ENCODE measurements at regions of chr10 and their contacts with region 1.

Region 1: DNA sequence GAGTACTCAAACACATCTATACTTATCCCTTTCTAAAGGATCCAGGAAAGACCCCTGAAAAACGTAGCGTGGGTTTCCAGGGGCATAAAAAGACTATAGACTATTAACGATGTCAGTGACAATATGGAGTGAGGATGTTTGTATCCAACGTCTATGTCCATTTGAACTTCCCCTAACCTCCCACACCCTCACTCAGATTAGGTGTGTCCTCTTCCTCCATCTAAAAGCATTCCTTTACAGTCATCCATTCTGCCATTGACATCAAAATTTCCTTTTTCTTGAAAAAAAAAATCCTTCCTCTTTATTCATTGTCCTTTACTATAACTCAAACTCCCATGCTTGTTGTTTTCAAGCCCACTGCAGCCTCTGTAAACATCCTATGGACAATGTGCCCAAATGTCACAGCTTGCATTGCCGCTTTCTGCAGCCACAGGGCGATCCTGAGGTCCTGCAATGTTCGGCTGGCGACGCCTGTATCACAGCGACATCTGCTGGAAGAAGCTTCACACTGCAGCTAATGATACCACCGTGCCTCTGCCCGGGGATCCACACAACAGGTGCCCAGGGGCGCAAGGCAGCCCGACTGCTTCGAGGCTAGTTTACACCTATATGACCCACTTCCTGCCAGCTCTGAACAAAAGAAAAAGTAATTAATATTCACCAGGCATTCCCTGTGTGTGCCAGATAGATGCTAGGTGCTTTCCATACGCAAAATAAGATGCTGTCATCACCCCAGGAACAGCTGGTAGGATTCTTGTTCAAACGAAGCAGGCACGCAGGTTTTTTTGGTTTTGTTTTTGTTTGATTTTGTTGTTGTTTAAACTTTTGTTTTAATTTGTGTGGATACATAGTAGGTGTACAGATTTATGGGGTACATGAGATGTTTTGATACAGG is 267.9 kb upstream of the GHITM start:
- DNase-seq: peak; percentile 76
- H3K4me3 Mint-ChIP-seq: no peak overlapping the region
- H3K27ac Mint-ChIP-seq: no peak overlapping the region
- H3K4me1 Mint-ChIP-seq: no peaks in the 10 kb centered on the region
- H3K27me3 Mint-ChIP-seq: no peaks in the 10 kb centered on the region

Region 2: GRCh38 chr10:82796510-82796909 is 1074.9 kb before region 1 on chr10:
- CTCF ChIA-PET with region 1: interaction called, 4 read pairs
- intact Hi-C with region 1: loop called (anchors 5 kb)
- DNase-seq: no peak
- H3K4me3 Mint-ChIP-seq: no peak overlapping the region
- H3K27ac Mint-ChIP-seq: no peak overlapping the region
- H3K4me1 Mint-ChIP-seq: no peaks in the 10 kb centered on the region
- H3K27me3 Mint-ChIP-seq: no peaks in the 10 kb centered on the region

Region 3: GRCh38 chr10:83849135-83849534 is 22.3 kb before region 1 on chr10:
- CTCF ChIA-PET with region 1: interaction called, 18 read pairs
- intact Hi-C with region 1: no loop called
- DNase-seq: no peak
- H3K4me3 Mint-ChIP-seq: no peak overlapping the region
- H3K27ac Mint-ChIP-seq: no peak overlapping the region
- H3K4me1 Mint-ChIP-seq: no peaks in the 10 kb centered on the region
- H3K27me3 Mint-ChIP-seq: no peaks in the 10 kb centered on the region